ENCODE measurements at regions of chr11 and their contacts with region 1.

Region 1: GRCh38 chr11:18526521-18527296 is at the start of gene TSG101:
- DNase-seq: peak; percentile 98
- ATAC-seq: peak; percentile 82
- H3K4me3 ChIP-seq: peak within 1 kb of the TSS; percentile 82 to 94 (median 84)
- H3K4me3 Mint-ChIP-seq: peak within 1 kb of the TSS; percentile 100
- H3K27ac ChIP-seq: peak within 1 kb of the TSS; percentile 97 to 99
- H3K27ac Mint-ChIP-seq: peak within 1 kb of the TSS; percentile 99
- H3K4me1 ChIP-seq: peaks cover 14% of the 10 kb centered on the region in 2 donors
- H3K4me1 Mint-ChIP-seq: peaks cover 45% of the 10 kb centered on the region
- H3K27me3 ChIP-seq: no peaks in the 10 kb centered on the region
- H3K27me3 Mint-ChIP-seq: no peaks in the 10 kb centered on the region
- CTCF ChIP-seq: no peak
- total RNA-seq, gene TSG101: 49.6 and 50.9 TPM in 2 replicates

Region 2: DNA sequence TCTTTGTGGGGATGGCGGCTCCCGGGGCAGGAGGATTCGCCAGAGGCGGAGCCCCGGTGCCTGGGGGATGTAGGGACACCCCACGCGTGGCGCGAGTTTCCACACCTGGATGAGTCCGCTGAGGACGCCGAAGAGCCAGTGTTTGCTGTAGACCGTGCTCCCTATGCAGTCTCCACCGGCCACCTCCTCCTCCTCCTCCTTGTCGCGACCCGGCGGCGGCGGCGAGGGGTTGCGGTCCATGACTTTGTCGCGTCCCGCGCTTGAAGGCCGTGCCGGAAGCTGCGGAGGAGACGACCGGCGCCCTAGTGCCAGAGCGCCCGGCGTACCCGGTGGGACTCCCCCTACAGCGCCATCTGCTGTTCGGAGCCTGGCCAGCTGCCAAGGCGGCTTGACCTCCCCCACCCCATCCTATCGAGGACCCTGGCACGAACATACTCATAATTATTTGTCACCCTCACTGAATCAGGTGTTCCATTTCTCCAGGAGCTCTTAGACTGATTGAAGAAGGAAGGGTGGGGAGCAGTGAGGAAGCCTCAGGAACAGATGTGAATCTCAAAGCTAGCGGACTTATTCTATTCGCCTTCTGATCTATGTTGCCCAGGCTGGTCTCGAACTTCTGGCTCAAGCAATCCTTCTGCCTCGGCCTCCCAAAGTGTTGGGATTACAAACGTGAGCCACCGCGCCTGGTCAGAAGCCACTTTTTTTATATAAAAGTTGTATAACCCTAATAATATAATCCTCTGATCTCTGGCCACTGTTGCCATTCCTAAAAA is 420.7 kb before region 1 on chr11 and contains the start of gene SAAL1:
- CTCF ChIA-PET with region 1: interaction called, 4 read pairs
- POLR2A ChIA-PET with region 1: no interaction called
- intact Hi-C with region 1: loop called (anchors 5 kb)
- DNase-seq: peak; percentile 91
- ATAC-seq: peak; percentile 98
- H3K4me3 ChIP-seq: peak within 1 kb of the TSS; percentile 70 to 99 (median 82)
- H3K4me3 Mint-ChIP-seq: peak within 1 kb of the TSS; percentile 95
- H3K27ac ChIP-seq: peak within 1 kb of the TSS; percentile 65 to 91
- H3K27ac Mint-ChIP-seq: peak within 1 kb of the TSS; percentile 90
- H3K4me1 ChIP-seq: peaks cover 15 to 17% of the 10 kb centered on the region in 2 donors
- H3K4me1 Mint-ChIP-seq: peaks cover 28% of the 10 kb centered on the region
- H3K27me3 ChIP-seq: peaks cover 0 to 4% (median 1%) of the 10 kb centered on the region in 4 experiments
- H3K27me3 Mint-ChIP-seq: peaks cover 19% of the 10 kb centered on the region
- CTCF ChIP-seq: peak; percentile 89
- total RNA-seq, gene SAAL1: 35.2 and 37.8 TPM in 2 replicates

Region 3: GRCh38 chr11:18588297-18589252 is 61.9 kb after region 1 on chr11 and contains the start of gene UEVLD:
- CTCF ChIA-PET with region 1: no interaction called
- POLR2A ChIA-PET with region 1: no interaction called
- intact Hi-C with region 1: loop called (anchors 5 kb)
- DNase-seq: peak; percentile 73
- ATAC-seq: peak; percentile 87
- H3K4me3 ChIP-seq: peak within 1 kb of the TSS; percentile 92 to 97 (median 96)
- H3K4me3 Mint-ChIP-seq: no peak within 1 kb of the TSS
- H3K27ac ChIP-seq: peak within 1 kb of the TSS; percentile 41 to 78
- H3K27ac Mint-ChIP-seq: no peak within 1 kb of the TSS
- H3K4me1 ChIP-seq: peaks cover 13 to 17% of the 10 kb centered on the region in 2 donors
- H3K4me1 Mint-ChIP-seq: peaks cover 3% of the 10 kb centered on the region
- H3K27me3 ChIP-seq: no peaks in the 10 kb centered on the region
- H3K27me3 Mint-ChIP-seq: no peaks in the 10 kb centered on the region
- CTCF ChIP-seq: no peak
- total RNA-seq, gene UEVLD: 12.4 and 12.8 TPM in 2 replicates

Region 4: GRCh38 chr11:18698341-18699268 is 171.9 kb after region 1 on chr11 and contains the start of gene TMEM86A:
- CTCF ChIA-PET with region 1: no interaction called
- POLR2A ChIA-PET with region 1: no interaction called
- intact Hi-C with region 1: loop called (anchors 2 kb)
- DNase-seq: peak; percentile 89
- ATAC-seq: peak; percentile 99
- H3K4me3 ChIP-seq: peak within 1 kb of the TSS; percentile 37 to 71 (median 60)
- H3K4me3 Mint-ChIP-seq: peak within 1 kb of the TSS; percentile 90
- H3K27ac ChIP-seq: peak within 1 kb of the TSS in 1 of 2 donors; percentile 32
- H3K27ac Mint-ChIP-seq: peak within 1 kb of the TSS; percentile 48
- H3K4me1 ChIP-seq: peaks cover 13 to 17% of the 10 kb centered on the region in 2 donors
- H3K4me1 Mint-ChIP-seq: peaks cover 18% of the 10 kb centered on the region
- H3K27me3 ChIP-seq: peaks cover 0 to 17% (median 0%) of the 10 kb centered on the region in 4 experiments
- H3K27me3 Mint-ChIP-seq: peaks cover 16% of the 10 kb centered on the region
- CTCF ChIP-seq: no peak
- total RNA-seq, gene TMEM86A: 0.58 and 1.1 TPM in 2 replicates